GM13977 (cell line): ENCODE measurements at regions of chr10 and their contacts with region 1.

Region 1: GRCh38 chr10:17257466-17258321 is 29.7 kb downstream of the VIM start:
- DNase-seq: peak; percentile 44
- CTCF ChIP-seq: peak; percentile 75

Region 2: GRCh38 chr10:16843252-16843870 is 414.3 kb before region 1 on chr10:
- in situ Hi-C with region 1: loop called (anchors 10 kb)
- DNase-seq: peak; percentile 34
- CTCF ChIP-seq: peak; percentile 52

Region 3: GRCh38 chr10:18340496-18341051 is 1082.9 kb after region 1 on chr10:
- in situ Hi-C with region 1: no loop called
- DNase-seq: no peak
- CTCF ChIP-seq: no peak